CD4-positive, alpha-beta T cell (primary cell): ENCODE measurements at regions of chr3 and their contacts with region 1.

Region 1: GRCh38 chr3:52278510-52279069 is at the start of gene WDR82:
- DNase-seq: peak in 13 of 14 experiments; percentile 94 to 99 (median 98)
- ATAC-seq: peak; percentile 77
- H3K4me3 ChIP-seq: peak within 1 kb of the TSS; percentile 98
- H3K4me3 Mint-ChIP-seq: peak within 1 kb of the TSS; percentile 98
- H3K27ac ChIP-seq: peak within 1 kb of the TSS; percentile 92 to 94
- H3K27ac Mint-ChIP-seq: peak within 1 kb of the TSS; percentile 92
- H3K4me1 ChIP-seq: peaks cover 61% of the 10 kb centered on the region
- H3K4me1 Mint-ChIP-seq: peaks cover 74% of the 10 kb centered on the region
- H3K27me3 ChIP-seq: no peaks in the 10 kb centered on the region
- H3K27me3 Mint-ChIP-seq: no peaks in the 10 kb centered on the region
- CTCF ChIP-seq: peak; percentile 47
- total RNA-seq, gene WDR82: 114 TPM

Region 2: GRCh38 chr3:52220380-52221026 is 58.1 kb before region 1 on chr3:
- CTCF ChIA-PET with region 1: interaction called, 7 read pairs
- POLR2A ChIA-PET with region 1: interaction called, 64 read pairs
- intact Hi-C with region 1: no loop called
- DNase-seq: peak; percentile 82 to 95 (median 88)
- ATAC-seq: peak; percentile 61
- H3K4me3 ChIP-seq: no peak overlapping the region
- H3K4me3 Mint-ChIP-seq: peak overlapping the region; percentile 77
- H3K27ac ChIP-seq: no peak overlapping the region
- H3K27ac Mint-ChIP-seq: peak overlapping the region; percentile 76
- H3K4me1 ChIP-seq: peaks cover 100% of the 10 kb centered on the region
- H3K4me1 Mint-ChIP-seq: peaks cover 91% of the 10 kb centered on the region
- H3K27me3 ChIP-seq: no peaks in the 10 kb centered on the region
- H3K27me3 Mint-ChIP-seq: no peaks in the 10 kb centered on the region
- CTCF ChIP-seq: peak; percentile 83

Region 3: DNA sequence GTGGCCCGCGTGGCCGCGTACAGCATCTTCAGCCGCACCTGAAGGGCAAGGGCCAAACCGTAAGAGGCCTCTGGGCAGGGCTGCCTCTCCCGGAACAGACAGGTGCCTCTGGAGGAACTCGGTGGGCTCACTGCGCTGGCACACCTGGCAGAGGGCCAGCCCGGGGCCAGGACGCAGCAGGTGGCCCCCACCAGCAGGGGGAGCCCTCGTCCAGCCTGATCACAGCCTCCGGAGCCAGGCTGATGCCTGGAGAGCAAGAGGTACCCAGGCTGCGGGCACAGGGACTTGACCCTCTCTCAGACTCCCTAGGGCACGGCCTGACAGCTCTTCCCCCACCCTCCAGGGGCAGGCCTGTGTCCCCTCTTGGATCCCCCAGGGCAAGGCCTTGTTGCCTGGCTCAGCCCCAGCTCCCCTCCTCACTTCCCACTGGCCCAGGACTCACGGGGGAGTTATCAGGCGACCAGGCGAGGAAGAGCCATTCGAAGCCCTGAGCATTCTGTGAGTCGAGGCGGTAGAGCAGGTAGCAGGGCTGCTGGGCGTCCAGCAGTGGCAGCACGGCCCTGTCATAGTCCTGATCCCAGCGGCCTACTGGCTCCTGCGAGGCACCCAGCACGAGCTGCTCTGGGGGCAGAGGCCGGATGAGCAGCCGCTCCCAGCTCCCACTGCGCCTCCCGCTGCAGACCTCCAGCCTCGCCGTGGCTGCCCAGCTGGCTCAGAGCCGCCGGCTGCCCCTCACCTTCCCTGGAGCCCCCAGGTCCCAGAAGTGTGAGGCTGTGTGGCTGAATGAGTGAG is 46.9 kb before region 1 on chr3:
- CTCF ChIA-PET with region 1: interaction called, 62 read pairs
- POLR2A ChIA-PET with region 1: interaction called, 134 read pairs
- intact Hi-C with region 1: no loop called
- DNase-seq: peak; percentile 70 to 94 (median 88)
- ATAC-seq: peak; percentile 75
- H3K4me3 ChIP-seq: no peak overlapping the region
- H3K4me3 Mint-ChIP-seq: peak overlapping the region; percentile 30
- H3K27ac ChIP-seq: peak overlapping the region in 1 of 2 donors; percentile 43
- H3K27ac Mint-ChIP-seq: peak overlapping the region; percentile 72
- H3K4me1 ChIP-seq: peaks cover 73% of the 10 kb centered on the region
- H3K4me1 Mint-ChIP-seq: peaks cover 56% of the 10 kb centered on the region
- H3K27me3 ChIP-seq: no peaks in the 10 kb centered on the region
- H3K27me3 Mint-ChIP-seq: no peaks in the 10 kb centered on the region
- CTCF ChIP-seq: peak; percentile 67

Region 4: DNA sequence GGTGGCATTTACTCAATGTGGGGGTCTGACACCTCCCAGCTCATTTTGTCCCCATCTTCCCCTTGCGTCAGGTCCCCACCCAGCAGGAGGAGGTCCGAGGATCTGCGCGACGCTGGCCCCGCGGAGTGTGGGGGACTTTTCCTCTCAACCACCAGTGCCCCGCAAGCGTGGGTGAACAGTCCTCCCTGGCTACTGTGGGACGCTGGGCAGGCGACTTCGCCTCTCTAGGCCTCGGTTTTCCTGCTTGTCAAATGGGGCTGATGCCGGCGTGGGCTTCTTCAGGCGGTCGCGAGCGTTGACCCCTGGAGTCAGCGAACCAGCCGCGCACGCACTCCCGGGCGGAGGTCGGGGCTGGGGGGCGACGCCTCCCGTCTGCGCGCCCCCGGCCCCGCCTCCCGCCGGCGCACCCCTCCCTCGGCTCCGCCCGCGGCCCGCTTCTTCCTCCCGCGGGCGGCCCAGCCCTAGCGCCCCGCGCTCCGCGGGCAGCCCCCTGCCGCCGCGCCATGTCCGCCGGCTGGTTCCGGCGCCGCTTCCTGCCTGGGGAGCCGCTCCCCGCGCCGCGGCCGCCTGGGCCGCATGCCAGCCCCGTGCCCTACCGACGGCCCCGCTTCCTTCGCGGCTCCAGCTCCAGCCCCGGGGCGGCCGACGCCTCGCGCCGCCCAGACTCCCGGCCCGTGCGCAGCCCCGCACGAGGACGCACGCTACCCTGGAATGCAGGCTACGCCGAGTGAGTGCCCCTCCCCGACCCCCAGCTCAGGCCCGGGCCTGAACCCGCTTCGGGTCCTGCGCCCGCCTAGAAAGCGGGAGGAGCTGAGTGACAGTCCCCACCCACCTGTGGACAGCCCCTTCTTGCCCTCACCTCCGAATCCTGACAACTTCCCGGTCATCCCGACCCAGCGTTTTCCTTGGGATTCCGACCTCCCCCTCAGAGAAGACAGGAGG is 33.0 kb before region 1 on chr3 and contains the start of gene PPM1M:
- CTCF ChIA-PET with region 1: interaction called, 31 read pairs
- POLR2A ChIA-PET with region 1: interaction called, 538 read pairs
- intact Hi-C with region 1: no loop called
- DNase-seq: peak in 13 of 14 experiments; percentile 28 to 90 (median 65)
- ATAC-seq: peak; percentile 64
- H3K4me3 ChIP-seq: peak within 1 kb of the TSS; percentile 91
- H3K4me3 Mint-ChIP-seq: peak within 1 kb of the TSS; percentile 88
- H3K27ac ChIP-seq: peak within 1 kb of the TSS; percentile 90 to 95
- H3K27ac Mint-ChIP-seq: peak within 1 kb of the TSS; percentile 95
- H3K4me1 ChIP-seq: peaks cover 82% of the 10 kb centered on the region
- H3K4me1 Mint-ChIP-seq: peaks cover 87% of the 10 kb centered on the region
- H3K27me3 ChIP-seq: no peaks in the 10 kb centered on the region
- H3K27me3 Mint-ChIP-seq: no peaks in the 10 kb centered on the region
- CTCF ChIP-seq: no peak
- total RNA-seq, gene PPM1M: 36.7 to 40.2 TPM

Region 5: GRCh38 chr3:52259035-52259434 is 19.6 kb before region 1 on chr3:
- CTCF ChIA-PET with region 1: interaction called, 31 read pairs
- POLR2A ChIA-PET with region 1: interaction called, 538 read pairs
- intact Hi-C with region 1: no loop called
- DNase-seq: no peak
- ATAC-seq: no peak
- H3K4me3 ChIP-seq: no peak overlapping the region
- H3K4me3 Mint-ChIP-seq: no peak overlapping the region
- H3K27ac ChIP-seq: peak overlapping the region in 1 of 2 donors; percentile 49
- H3K27ac Mint-ChIP-seq: peak overlapping the region; percentile 95
- H3K4me1 ChIP-seq: peaks cover 78% of the 10 kb centered on the region
- H3K4me1 Mint-ChIP-seq: peaks cover 98% of the 10 kb centered on the region
- H3K27me3 ChIP-seq: no peaks in the 10 kb centered on the region
- H3K27me3 Mint-ChIP-seq: no peaks in the 10 kb centered on the region
- CTCF ChIP-seq: no peak

Region 6: GRCh38 chr3:52339612-52340011 is 61.0 kb after region 1 on chr3:
- CTCF ChIA-PET with region 1: interaction called, 7 read pairs
- POLR2A ChIA-PET with region 1: interaction called, 15 read pairs
- intact Hi-C with region 1: loop called in 1 of 2 experiments (anchors 10 kb)
- DNase-seq: peak in 13 of 14 experiments; percentile 7 to 87 (median 28)
- ATAC-seq: peak; percentile 76
- H3K4me3 ChIP-seq: no peak overlapping the region
- H3K4me3 Mint-ChIP-seq: no peak overlapping the region
- H3K27ac ChIP-seq: no peak overlapping the region
- H3K27ac Mint-ChIP-seq: no peak overlapping the region
- H3K4me1 ChIP-seq: no peaks in the 10 kb centered on the region
- H3K4me1 Mint-ChIP-seq: peaks cover 11% of the 10 kb centered on the region
- H3K27me3 ChIP-seq: no peaks in the 10 kb centered on the region
- H3K27me3 Mint-ChIP-seq: no peaks in the 10 kb centered on the region
- CTCF ChIP-seq: peak; percentile 85

Region 7: DNA sequence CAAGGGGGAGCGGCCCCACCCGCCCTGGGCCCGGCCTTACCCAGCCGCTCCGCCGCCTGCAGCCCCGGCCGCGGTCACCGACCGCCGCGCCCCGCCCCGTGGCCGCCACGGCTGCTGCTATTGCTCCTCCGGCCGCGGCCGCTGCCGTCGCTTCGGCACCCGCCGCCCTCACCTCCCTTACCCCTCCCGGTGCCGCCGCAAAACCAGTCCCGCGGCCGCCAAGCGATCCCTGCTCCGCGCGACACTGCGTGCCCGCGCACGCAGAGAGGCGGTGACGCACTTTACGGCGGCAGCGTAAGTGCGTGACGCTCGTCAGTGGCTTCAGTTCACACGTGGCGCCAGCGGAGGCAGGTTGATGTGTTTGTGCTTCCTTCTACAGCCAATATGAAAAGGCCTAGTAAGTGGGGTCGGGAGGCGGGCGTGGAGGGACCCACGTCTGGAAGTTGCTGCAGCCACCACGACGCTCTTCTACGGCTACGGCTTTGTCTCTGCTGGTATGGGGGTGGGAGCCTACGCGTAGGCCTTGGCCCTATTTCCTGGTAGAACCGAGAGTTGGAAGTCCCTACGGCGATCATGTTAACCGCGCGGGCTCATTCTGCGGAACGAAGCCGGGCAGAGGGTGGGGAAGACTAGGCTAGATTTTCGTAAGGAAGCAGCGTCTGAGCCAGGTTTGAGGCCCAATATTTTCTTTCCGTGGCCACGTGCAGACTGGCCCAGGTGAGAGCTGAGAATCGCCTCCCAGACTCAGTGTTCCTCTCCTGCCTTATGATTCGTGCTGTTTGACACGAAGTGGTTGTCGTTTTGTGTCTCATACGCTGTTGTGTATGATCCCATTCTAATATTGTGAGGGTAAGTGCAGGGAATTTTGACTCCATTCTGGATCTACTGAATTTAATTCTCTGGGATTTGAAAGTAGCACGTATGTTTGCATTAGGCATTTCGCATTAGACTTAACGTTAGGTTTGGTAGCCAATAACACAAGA is 407.4 kb after region 1 on chr3 and contains the starts of genes GNL3 and PBRM1:
- CTCF ChIA-PET with region 1: no interaction called
- POLR2A ChIA-PET with region 1: no interaction called
- intact Hi-C with region 1: loop called in 1 of 2 experiments (anchors 10 kb)
- DNase-seq: peak; percentile 84 to 98 (median 89)
- ATAC-seq: peak; percentile 85
- H3K4me3 ChIP-seq: peak within 1 kb of the TSS; percentile 81
- H3K4me3 Mint-ChIP-seq: peak within 1 kb of the TSS; percentile 100
- H3K27ac ChIP-seq: peak within 1 kb of the TSS; percentile 85 to 93
- H3K27ac Mint-ChIP-seq: peak within 1 kb of the TSS; percentile 97
- H3K4me1 ChIP-seq: peaks cover 21% of the 10 kb centered on the region
- H3K4me1 Mint-ChIP-seq: peaks cover 57% of the 10 kb centered on the region
- H3K27me3 ChIP-seq: no peaks in the 10 kb centered on the region
- H3K27me3 Mint-ChIP-seq: no peaks in the 10 kb centered on the region
- CTCF ChIP-seq: no peak
- total RNA-seq, gene GNL3: 104 to 106 TPM
- total RNA-seq, gene PBRM1: 47.6 to 48.1 TPM